ENCODE measurements at regions of chr16 and their contacts with region 1.

Region 1: DNA sequence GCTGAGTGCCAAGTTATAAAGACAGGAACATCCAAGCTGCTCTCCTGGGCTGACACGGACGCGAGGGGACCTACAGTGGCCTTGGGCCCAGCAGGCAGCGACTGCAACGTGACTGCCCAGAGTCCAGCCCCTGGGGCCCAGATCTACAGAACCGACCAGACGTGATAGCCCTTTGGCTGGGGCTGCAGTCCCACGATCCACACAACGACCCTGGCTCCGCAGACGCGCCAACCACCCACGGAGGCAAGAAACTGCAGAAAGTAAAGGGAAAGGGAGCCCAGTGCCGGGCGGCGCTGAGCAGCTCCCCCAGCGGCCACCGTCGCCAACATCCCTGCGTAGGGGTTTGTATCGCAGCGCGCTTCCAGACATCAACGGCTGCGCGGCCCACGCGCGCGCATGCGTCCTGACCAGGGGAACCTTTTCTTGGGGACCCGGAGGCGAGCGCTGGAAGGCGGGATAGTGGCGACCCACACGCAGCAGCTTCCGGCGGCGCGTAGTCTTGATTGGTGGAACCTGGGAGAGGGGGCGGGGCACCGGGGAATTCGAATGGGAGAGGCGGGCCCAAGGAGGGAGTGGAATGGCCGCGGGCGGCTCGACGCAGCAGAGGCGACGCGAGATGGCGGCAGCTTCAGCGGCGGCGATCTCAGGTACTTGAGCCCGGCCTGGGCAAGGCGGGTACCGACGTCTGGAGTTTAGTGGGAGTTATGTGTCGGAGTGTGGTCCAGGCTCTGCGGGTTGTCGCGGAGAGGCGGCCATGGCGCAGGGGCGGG is at the start of gene KIF22:
- DNase-seq: peak; percentile 100
- ATAC-seq: peak; percentile 96
- H3K4me3 ChIP-seq: peak within 1 kb of the TSS; percentile 65 to 93 (median 78)
- H3K4me3 Mint-ChIP-seq: peak within 1 kb of the TSS; percentile 99
- H3K27ac ChIP-seq: peak within 1 kb of the TSS; percentile 75 to 77
- H3K27ac Mint-ChIP-seq: peak within 1 kb of the TSS; percentile 99
- H3K4me1 ChIP-seq: peaks cover 19 to 34% of the 10 kb centered on the region in 2 donors
- H3K4me1 Mint-ChIP-seq: peaks cover 34% of the 10 kb centered on the region
- H3K27me3 ChIP-seq: no peaks in the 10 kb centered on the region
- H3K27me3 Mint-ChIP-seq: no peaks in the 10 kb centered on the region
- CTCF ChIP-seq: peak; percentile 84
- total RNA-seq, gene KIF22: 53.5 and 53.9 TPM in 2 replicates

Region 2: DNA sequence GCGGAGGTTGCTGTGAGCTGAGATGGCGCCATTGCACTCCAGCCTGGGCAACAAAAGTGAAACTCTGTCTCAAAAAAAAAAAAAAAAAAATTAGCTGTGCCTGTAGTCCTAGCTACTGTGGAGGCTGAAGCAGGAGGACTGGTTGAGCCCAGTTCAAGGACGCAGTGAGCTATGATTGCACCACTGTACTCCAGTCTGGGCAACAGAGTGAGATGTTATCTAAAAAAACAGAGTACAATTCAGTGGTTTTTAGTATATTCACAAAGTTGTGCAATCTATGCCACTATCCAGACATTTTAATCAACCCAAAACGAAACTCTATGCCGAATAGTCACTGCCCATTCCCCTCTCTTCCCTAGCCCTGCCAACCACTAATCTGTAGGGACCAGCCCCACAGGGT is 69.7 kb before region 1 on chr16:
- CTCF ChIA-PET with region 1: interaction called, 13 read pairs
- POLR2A ChIA-PET with region 1: interaction called, 3 read pairs
- intact Hi-C with region 1: no loop called
- DNase-seq: no peak
- ATAC-seq: no peak
- H3K4me3 ChIP-seq: no peak overlapping the region
- H3K4me3 Mint-ChIP-seq: peak overlapping the region; percentile 23
- H3K27ac ChIP-seq: no peak overlapping the region
- H3K27ac Mint-ChIP-seq: no peak overlapping the region
- H3K4me1 ChIP-seq: peaks cover 0 to 3% of the 10 kb centered on the region in 2 donors
- H3K4me1 Mint-ChIP-seq: peaks cover 6% of the 10 kb centered on the region
- H3K27me3 ChIP-seq: no peaks in the 10 kb centered on the region
- H3K27me3 Mint-ChIP-seq: no peaks in the 10 kb centered on the region
- CTCF ChIP-seq: no peak

Region 3: DNA sequence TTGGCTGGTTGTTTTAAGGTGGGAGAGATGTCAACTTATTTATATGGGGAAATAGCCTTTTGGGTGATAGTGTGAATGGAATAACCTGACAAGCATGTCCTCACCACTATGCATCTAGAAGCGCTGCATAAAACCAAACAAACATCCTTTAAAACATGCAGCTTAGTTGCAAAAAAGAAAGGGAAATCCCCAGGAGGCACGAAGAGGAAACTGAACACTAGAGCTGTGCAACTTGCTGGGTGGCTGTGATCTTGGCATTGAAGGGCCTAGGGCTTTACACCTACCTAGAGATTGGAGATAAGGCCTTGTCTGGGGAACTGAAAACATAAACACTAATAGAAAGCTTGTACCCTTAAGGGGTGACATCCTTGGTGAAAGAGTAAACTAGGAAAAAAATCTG is 51.9 kb before region 1 on chr16:
- CTCF ChIA-PET with region 1: interaction called, 15 read pairs
- POLR2A ChIA-PET with region 1: interaction called, 4 read pairs
- intact Hi-C with region 1: no loop called
- DNase-seq: peak; percentile 74
- ATAC-seq: peak; percentile 91
- H3K4me3 ChIP-seq: peak overlapping the region in 1 of 5 experiments; percentile 9
- H3K4me3 Mint-ChIP-seq: peak overlapping the region; percentile 66
- H3K27ac ChIP-seq: peak overlapping the region in 1 of 2 donors; percentile 47
- H3K27ac Mint-ChIP-seq: peak overlapping the region; percentile 90
- H3K4me1 ChIP-seq: peaks cover 47 to 62% of the 10 kb centered on the region in 2 donors
- H3K4me1 Mint-ChIP-seq: peaks cover 73% of the 10 kb centered on the region
- H3K27me3 ChIP-seq: no peaks in the 10 kb centered on the region
- H3K27me3 Mint-ChIP-seq: no peaks in the 10 kb centered on the region
- CTCF ChIP-seq: no peak

Region 4: GRCh38 chr16:29757950-29758466 is 32.4 kb before region 1 on chr16:
- CTCF ChIA-PET with region 1: interaction called, 20 read pairs
- POLR2A ChIA-PET with region 1: interaction called, 10 read pairs
- intact Hi-C with region 1: no loop called
- DNase-seq: no peak
- ATAC-seq: no peak
- H3K4me3 ChIP-seq: no peak overlapping the region
- H3K4me3 Mint-ChIP-seq: no peak overlapping the region
- H3K27ac ChIP-seq: no peak overlapping the region
- H3K27ac Mint-ChIP-seq: peak overlapping the region; percentile 41
- H3K4me1 ChIP-seq: peaks cover 10 to 30% of the 10 kb centered on the region in 2 donors
- H3K4me1 Mint-ChIP-seq: peaks cover 15% of the 10 kb centered on the region
- H3K27me3 ChIP-seq: no peaks in the 10 kb centered on the region
- H3K27me3 Mint-ChIP-seq: no peaks in the 10 kb centered on the region
- CTCF ChIP-seq: no peak

Region 5: GRCh38 chr16:29815793-29816693 is 25.7 kb after region 1 on chr16 and contains the start of gene PAGR1:
- CTCF ChIA-PET with region 1: interaction called, 14 read pairs
- POLR2A ChIA-PET with region 1: interaction called, 15 read pairs
- intact Hi-C with region 1: loop called (anchors 1 kb)
- DNase-seq: peak; percentile 100
- ATAC-seq: peak; percentile 76
- H3K4me3 ChIP-seq: peak within 1 kb of the TSS; percentile 73 to 93 (median 84)
- H3K4me3 Mint-ChIP-seq: peak within 1 kb of the TSS; percentile 97
- H3K27ac ChIP-seq: peak within 1 kb of the TSS; percentile 88
- H3K27ac Mint-ChIP-seq: peak within 1 kb of the TSS; percentile 98
- H3K4me1 ChIP-seq: peaks cover 40 to 60% of the 10 kb centered on the region in 2 donors
- H3K4me1 Mint-ChIP-seq: peaks cover 65% of the 10 kb centered on the region
- H3K27me3 ChIP-seq: peaks cover 0 to 13% (median 5%) of the 10 kb centered on the region in 4 experiments
- H3K27me3 Mint-ChIP-seq: no peaks in the 10 kb centered on the region
- CTCF ChIP-seq: peak; percentile 97
- total RNA-seq, gene PAGR1: 26.7 and 28.4 TPM in 2 replicates

Region 6: GRCh38 chr16:29877266-29877961 is 87.0 kb after region 1 on chr16:
- CTCF ChIA-PET with region 1: no interaction called
- POLR2A ChIA-PET with region 1: no interaction called
- intact Hi-C with region 1: no loop called
- DNase-seq: peak; percentile 69
- ATAC-seq: peak; percentile 68
- H3K4me3 ChIP-seq: no peak overlapping the region
- H3K4me3 Mint-ChIP-seq: peak overlapping the region; percentile 71
- H3K27ac ChIP-seq: no peak overlapping the region
- H3K27ac Mint-ChIP-seq: no peak overlapping the region
- H3K4me1 ChIP-seq: peaks cover 17 to 18% of the 10 kb centered on the region in 2 donors
- H3K4me1 Mint-ChIP-seq: peaks cover 16% of the 10 kb centered on the region
- H3K27me3 ChIP-seq: peaks cover 0 to 42% (median 10%) of the 10 kb centered on the region in 4 experiments
- H3K27me3 Mint-ChIP-seq: peaks cover 31% of the 10 kb centered on the region
- CTCF ChIP-seq: no peak

Region 7: DNA sequence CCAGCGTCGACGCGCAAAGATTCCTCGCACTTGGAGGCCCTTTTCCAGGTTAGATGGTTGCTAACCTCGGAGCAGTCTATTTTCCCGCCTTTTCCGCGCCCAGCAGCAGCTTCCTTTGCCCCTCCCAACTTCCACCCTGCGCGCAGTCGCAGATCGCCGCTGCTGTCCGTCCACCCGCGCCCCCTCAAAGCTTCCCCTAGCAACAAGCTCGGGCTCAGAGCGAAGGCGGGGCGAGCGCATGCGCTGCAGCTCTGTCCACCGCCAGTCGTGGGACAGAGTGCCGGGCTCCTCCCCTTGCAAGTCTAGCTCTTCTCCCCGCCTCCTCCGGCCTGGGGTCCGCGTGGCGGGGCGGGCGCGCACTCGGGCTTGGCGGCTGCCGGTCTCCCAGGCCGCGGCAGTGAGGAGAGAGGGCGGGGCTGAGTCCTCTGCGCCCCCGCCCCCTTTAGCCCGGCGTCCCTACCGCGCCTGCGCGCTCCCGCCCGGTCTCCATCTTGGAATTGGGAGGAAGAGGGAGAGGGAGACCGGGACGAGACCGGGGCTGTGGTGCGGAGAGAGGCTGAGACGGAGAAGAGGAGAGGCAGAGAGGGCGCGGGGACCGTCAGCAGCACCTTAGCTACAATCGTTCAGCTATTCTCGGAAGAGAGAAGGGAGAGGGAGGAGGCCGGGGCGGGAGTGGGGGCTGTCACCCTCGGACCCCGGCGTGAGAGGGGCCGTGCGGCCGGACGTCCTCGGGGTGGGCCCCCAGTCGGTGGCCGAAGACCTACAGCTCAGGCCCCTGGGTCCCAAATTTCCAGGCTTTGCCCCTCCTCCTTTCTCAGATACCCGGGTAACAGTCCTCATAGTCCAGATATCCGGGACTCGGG is 183.2 kb after region 1 on chr16 and contains the start of gene TAOK2:
- CTCF ChIA-PET with region 1: no interaction called
- POLR2A ChIA-PET with region 1: no interaction called
- intact Hi-C with region 1: loop called (anchors 5 kb)
- DNase-seq: peak; percentile 98
- ATAC-seq: peak; percentile 99
- H3K4me3 ChIP-seq: peak within 1 kb of the TSS; percentile 79 to 100 (median 99)
- H3K4me3 Mint-ChIP-seq: peak within 1 kb of the TSS; percentile 95
- H3K27ac ChIP-seq: peak within 1 kb of the TSS; percentile 73 to 79
- H3K27ac Mint-ChIP-seq: peak within 1 kb of the TSS; percentile 94
- H3K4me1 ChIP-seq: peaks cover 31 to 38% of the 10 kb centered on the region in 2 donors
- H3K4me1 Mint-ChIP-seq: peaks cover 36% of the 10 kb centered on the region
- H3K27me3 ChIP-seq: no peaks in the 10 kb centered on the region
- H3K27me3 Mint-ChIP-seq: no peaks in the 10 kb centered on the region
- CTCF ChIP-seq: no peak
- total RNA-seq, gene TAOK2: 50.8 and 51.9 TPM in 2 replicates

Region 8: DNA sequence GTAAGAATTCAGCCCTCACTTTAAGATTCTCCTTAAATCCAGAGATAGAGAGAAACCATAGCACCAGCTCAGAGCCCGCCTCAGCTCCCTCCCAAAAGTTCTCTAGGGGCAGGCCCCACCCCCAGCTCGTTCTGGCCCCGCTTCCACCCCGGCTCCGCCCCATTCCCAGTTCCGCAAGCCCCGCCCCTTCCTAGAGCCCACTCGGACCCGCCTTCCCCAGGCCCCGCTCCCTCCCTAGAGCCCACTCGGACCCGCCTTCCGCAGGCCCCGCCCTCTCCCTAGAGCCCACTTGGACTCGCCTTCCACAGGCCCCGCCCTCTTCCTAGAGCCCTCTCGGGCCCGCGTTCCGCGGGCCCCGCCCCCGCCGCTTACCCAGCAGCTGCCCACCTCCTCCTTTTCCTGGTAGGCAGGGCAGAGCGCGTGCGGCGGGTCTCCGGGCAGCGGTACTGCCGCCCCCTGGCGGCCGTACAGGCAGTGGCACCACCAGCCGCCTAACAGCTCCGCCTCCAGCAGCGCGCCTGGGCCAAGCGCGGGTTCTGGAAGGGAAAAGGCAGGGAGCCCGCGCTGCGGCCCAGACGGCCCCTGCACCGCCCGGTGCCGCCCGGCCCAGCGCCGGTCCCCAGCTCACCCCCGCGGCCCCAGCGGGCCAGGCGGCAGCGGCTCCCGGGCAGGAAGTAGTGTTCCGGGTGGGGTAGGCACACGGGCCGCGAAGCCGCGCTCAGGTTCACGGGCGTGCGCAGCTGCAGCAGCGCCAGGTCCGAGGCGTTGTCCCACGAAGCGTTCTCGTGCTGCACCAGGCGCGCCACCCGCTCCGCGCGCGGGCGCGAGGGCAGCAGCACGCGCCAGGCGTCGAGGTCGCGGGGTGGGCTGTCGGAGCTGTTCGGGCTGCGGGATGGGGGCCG is 1352.0 kb after region 1 on chr16:
- CTCF ChIA-PET with region 1: no interaction called
- POLR2A ChIA-PET with region 1: no interaction called
- intact Hi-C with region 1: no loop called
- DNase-seq: peak; percentile 99
- ATAC-seq: peak; percentile 95
- H3K4me3 ChIP-seq: peak overlapping the region in 4 of 5 experiments; percentile 21 to 71 (median 50)
- H3K4me3 Mint-ChIP-seq: peak overlapping the region; percentile 76
- H3K27ac ChIP-seq: peak overlapping the region; percentile 21 to 54
- H3K27ac Mint-ChIP-seq: peak overlapping the region; percentile 88
- H3K4me1 ChIP-seq: peaks cover 6 to 13% of the 10 kb centered on the region in 2 donors
- H3K4me1 Mint-ChIP-seq: peaks cover 9% of the 10 kb centered on the region
- H3K27me3 ChIP-seq: no peaks in the 10 kb centered on the region
- H3K27me3 Mint-ChIP-seq: peaks cover 6% of the 10 kb centered on the region
- CTCF ChIP-seq: peak; percentile 90

Measured in B cell (primary cell).